K562 (cell line): ENCODE measurements at regions of chr19 and their contacts with region 1.

Region 1: GRCh38 chr19:42283143-42284065 is 14.4 kb downstream of the CIC start:
- DNase-seq: peak; percentile 84 to 98 (median 91)
- ATAC-seq: peak; percentile 78
- H3K4me3 ChIP-seq: peak overlapping the region; percentile 48
- H3K27ac ChIP-seq: peak overlapping the region; percentile 90
- H3K4me1 ChIP-seq: peaks cover 49 to 85% of the 10 kb centered on the region in 2 experiments
- H3K27me3 ChIP-seq: no peaks in the 10 kb centered on the region; a peak in 1 of 5 replicates
- CTCF ChIP-seq: no peak; a peak in 1 of 6 replicates
- EP300 ChIP-seq: no peak
- POLR2A ChIP-seq: peak; percentile 64
- RAD21 ChIP-seq: peak in 1 of 2 experiments; percentile 12; a peak in 1 of 4 replicates

Region 2: DNA sequence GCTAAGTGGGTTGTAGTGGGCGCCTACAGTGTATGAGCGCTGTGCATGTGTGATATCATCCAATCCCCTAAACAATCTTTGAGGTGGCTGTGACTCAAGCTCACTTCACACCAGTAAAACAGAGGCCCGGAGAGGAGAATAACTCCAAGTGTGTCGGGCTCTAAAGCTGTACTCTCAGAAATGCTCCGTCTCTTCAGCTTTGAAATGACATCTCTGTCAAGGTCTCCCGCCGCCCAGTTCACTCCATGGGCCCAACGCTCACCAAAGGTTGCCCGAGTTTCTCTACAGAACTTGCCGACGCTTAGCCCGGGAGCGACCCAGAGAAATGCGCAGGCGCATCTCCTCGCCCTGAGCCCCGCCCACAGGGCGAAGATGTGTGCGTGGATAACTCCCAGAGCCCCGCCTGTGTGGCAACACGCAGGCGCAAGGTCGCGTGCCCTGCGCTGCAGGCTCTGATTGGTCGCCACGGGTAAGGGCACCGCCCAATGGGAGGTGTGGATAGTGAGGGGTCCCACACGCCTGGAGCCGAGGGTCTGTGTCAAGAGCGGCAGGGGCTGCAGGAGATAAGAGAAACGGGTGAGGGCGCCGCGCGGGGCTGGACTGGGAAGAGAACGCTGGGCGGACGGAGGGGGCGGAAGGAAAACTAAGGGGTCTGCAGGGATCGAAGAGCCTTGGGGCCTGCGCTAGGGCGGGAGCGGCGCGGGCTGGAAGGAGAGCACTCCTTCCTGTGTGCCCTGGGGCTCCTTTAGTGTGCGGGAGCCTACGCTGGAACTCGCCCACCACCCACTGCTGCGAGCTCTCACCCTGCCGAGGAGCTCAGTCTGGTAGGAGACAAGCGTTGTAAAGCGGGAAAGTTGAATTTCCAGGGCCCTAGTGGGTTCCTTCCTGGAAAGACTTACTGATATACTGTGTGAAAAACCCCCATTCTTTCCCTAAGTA is 63.3 kb before region 1 on chr19 and contains the start of gene ZNF526:
- CTCF ChIA-PET with region 1: no interaction called
- POLR2A ChIA-PET with region 1: interaction called, 10 read pairs
- in situ Hi-C with region 1: no loop called
- intact Hi-C with region 1: no loop called
- DNase-seq: peak; percentile 98 to 100 (median 99)
- ATAC-seq: peak; percentile 91
- H3K4me3 ChIP-seq: peak within 1 kb of the TSS; percentile 79
- H3K27ac ChIP-seq: peak within 1 kb of the TSS; percentile 89
- H3K4me1 ChIP-seq: peaks cover 27 to 55% of the 10 kb centered on the region in 2 experiments
- H3K27me3 ChIP-seq: no peaks in the 10 kb centered on the region
- CTCF ChIP-seq: 0 out of 6 replicates have a peak, but pooled peaks of 1 of the 3 experiments have one; percentile 3
- EP300 ChIP-seq: peak; percentile 3; the same call in 1 of the 2 replicates
- POLR2A ChIP-seq: peak; percentile 94
- RAD21 ChIP-seq: no peak
- polyA plus RNA-seq, gene ZNF526: 1.3 to 2.2 TPM

Region 3: DNA sequence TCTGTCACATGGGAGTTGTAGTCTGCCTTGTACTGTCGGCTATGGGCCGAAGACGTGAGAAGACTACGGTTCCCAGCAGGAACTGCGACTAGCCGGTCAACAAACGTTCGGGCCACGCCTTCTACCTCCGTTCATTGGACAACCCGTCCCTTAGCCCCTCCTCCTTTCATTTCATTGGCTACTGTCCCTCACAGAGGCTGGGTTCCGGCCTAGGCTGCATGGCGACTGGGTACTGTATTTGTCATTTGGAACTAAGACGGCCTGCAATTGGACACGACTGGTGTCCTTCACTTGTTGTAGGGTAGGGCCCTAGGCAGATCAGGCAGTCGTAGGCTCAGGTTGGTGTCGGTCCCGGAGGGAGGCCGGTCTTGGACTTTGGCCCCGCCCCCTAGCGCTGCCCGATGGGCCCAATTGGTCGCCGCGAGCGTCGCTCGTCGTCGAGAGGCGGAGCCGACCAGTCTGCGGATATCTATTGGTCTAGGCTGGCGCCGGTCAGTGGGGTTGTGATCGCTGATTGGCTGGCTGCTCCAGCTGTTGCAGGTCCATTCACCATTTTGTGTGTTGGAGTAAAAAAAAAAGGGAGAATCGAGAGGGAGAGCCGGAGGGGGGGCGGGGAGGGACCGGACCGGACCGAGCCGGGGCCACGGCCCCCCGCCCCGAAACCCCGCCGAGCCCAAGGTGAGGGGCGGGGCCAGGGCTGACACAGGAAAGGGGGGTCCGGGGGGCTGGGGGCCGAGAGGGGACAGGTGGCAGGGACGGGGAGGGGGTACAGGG is 14.5 kb before region 1 on chr19 and contains the start of gene CIC:
- CTCF ChIA-PET with region 1: no interaction called
- POLR2A ChIA-PET with region 1: interaction called, 16 read pairs
- in situ Hi-C with region 1: no loop called
- intact Hi-C with region 1: no loop called
- DNase-seq: peak; percentile 85 to 100 (median 92)
- ATAC-seq: peak; percentile 92
- H3K4me3 ChIP-seq: peak within 1 kb of the TSS; percentile 54
- H3K27ac ChIP-seq: peak within 1 kb of the TSS; percentile 98
- H3K4me1 ChIP-seq: peaks cover 17 to 51% of the 10 kb centered on the region in 2 experiments
- H3K27me3 ChIP-seq: no peaks in the 10 kb centered on the region
- CTCF ChIP-seq: no peak
- EP300 ChIP-seq: no peak
- POLR2A ChIP-seq: no peak
- RAD21 ChIP-seq: no peak
- polyA plus RNA-seq, gene CIC: 0.07 to 0.13 TPM

Region 4: DNA sequence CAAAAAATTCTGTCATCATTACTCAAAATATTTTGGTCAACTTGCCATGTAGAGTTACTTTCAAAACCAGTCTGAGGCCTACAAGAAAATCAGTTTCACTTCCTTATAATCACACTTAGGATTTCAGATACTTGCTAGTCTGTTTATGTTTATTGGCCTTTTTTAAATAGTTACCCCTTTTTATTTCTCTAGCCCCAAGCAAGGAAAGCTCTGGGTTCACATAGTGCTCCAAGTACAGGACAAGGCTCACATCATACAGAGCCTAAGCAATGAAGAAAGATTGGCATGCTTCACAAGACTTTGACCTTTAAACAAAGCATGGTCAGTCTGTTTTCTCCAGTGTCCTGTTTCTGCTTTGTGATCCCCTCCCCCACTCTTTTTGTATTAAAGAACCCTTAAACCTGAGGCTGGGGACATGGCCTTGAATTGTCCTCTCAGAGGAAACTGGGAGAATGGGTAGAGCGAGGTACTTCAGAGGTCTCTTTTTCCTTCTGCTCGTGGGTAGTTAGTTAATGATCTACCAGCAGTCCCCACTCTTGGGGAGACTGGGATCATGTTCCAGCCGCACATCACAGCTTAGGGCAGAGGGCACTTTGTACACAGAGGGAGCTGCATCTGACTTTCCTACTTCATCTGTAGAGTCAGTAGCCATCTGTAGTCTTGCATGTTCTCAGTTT is 214.2 kb after region 1 on chr19:
- CTCF ChIA-PET with region 1: no interaction called
- POLR2A ChIA-PET with region 1: no interaction called
- in situ Hi-C with region 1: no loop called
- intact Hi-C with region 1: no loop called
- DNase-seq: no peak
- ATAC-seq: no peak
- H3K4me3 ChIP-seq: no peak overlapping the region
- H3K27ac ChIP-seq: no peak overlapping the region
- H3K4me1 ChIP-seq: no peaks in the 10 kb centered on the region
- H3K27me3 ChIP-seq: peaks cover 11 to 14% of the 10 kb centered on the region in 2 experiments; a peak in 4 of 5 replicates
- CTCF ChIP-seq: no peak
- EP300 ChIP-seq: no peak
- POLR2A ChIP-seq: no peak
- RAD21 ChIP-seq: no peak